Dorsolateral prefrontal cortex (tissue), 120 donors: ENCODE measurements at regions of chr10 and their contacts with region 1.

Region 1: GRCh38 chr10:110600487-110601101 is 33.1 kb downstream of the SMC3 start:
- DNase-seq: peak in 2 of 10 donors; percentile 27 to 36
- H3K4me3 ChIP-seq: no peak overlapping the region
- H3K27ac ChIP-seq: no peak overlapping the region
- H3K27me3 ChIP-seq: no peaks in the 10 kb centered on the region
- CTCF ChIP-seq: peak; percentile 30 to 69 (median 54)

Region 2: DNA sequence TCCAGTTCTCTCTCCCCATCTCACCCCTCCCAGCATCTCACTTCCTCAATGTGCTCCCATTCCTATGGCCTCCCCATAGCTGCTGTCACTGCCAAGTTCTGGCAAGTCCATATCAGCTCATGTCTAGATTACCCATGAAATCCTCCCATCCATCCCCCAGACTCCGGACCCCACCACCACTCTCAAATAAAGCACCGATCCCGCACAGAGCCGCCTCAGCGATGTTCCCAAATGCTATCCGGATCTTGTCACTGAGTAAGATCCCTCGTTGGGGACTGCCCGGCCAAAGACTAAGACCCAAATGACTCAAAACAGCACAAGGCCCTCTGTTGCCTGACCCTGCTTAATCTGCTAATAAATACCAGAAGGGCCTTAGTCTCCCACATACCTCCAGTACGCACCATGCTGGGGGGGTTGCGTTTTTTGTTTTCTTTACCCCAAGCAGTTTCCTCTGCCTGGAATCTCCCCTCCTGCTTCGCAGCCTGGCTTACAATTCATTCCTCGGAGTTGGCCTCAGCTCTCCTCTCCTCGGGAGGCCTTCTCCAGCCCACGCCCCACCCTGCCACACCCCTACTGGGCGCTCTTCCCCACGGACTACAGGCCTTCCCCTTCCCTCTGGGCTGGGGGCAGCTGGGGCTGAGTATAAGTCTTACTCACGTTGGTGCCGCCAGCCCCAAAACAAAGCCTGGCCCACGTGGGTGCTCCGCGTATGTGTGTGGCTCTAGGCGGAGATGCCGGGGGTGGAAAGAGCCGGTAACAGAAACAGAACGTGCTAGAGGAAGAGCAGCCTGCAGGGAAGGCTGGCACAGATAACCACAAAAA is 104.7 kb before region 1 on chr10:
- intact Hi-C with region 1: no loop called
- DNase-seq: peak; percentile 31 to 86 (median 73)
- H3K4me3 ChIP-seq: peak overlapping the region in 55 of 59 donors; percentile 56 to 88 (median 80)
- H3K27ac ChIP-seq: peak overlapping the region in 44 of 59 donors; percentile 9 to 93 (median 78)
- H3K27me3 ChIP-seq: peaks cover 0 to 18% (median 0%) of the 10 kb centered on the region in 45 donors
- CTCF ChIP-seq: no peak

Region 3: GRCh38 chr10:111360260-111360925 is 759.8 kb after region 1 on chr10:
- intact Hi-C with region 1: loop called in 1 of 2 experiments (anchors 10 kb)
- DNase-seq: peak in 1 of 10 donors; percentile 27
- H3K4me3 ChIP-seq: no peak overlapping the region
- H3K27ac ChIP-seq: no peak overlapping the region
- H3K27me3 ChIP-seq: peaks cover 0 to 25% (median 0%) of the 10 kb centered on the region in 45 donors
- CTCF ChIP-seq: peak in 47 of 56 donors; percentile 10 to 63 (median 43)